ENCODE measurements at regions of chr2 and their contacts with region 1.

Region 1: GRCh38 chr2:27217217-27218121 is at the start of gene CAD:
- DNase-seq: peak; percentile 93
- H3K4me3 ChIP-seq: peak within 1 kb of the TSS; percentile 86
- H3K27ac ChIP-seq: peak within 1 kb of the TSS; percentile 77
- H3K4me1 ChIP-seq: peaks cover 41% of the 10 kb centered on the region
- CTCF ChIP-seq: peak; percentile 36; the same call in 1 of the 2 replicates
- total RNA-seq, gene CAD: 118 and 132 TPM in 2 replicates

Region 2: GRCh38 chr2:27233341-27233740 is 15.9 kb after region 1 on chr2:
- CTCF ChIA-PET with region 1: interaction called, 3 read pairs
- POLR2A ChIA-PET with region 1: interaction called, 15 read pairs
- intact Hi-C with region 1: no loop called
- DNase-seq: no peak
- H3K4me3 ChIP-seq: no peak overlapping the region
- H3K27ac ChIP-seq: no peak overlapping the region
- H3K4me1 ChIP-seq: no peaks in the 10 kb centered on the region
- CTCF ChIP-seq: no peak

Region 3: DNA sequence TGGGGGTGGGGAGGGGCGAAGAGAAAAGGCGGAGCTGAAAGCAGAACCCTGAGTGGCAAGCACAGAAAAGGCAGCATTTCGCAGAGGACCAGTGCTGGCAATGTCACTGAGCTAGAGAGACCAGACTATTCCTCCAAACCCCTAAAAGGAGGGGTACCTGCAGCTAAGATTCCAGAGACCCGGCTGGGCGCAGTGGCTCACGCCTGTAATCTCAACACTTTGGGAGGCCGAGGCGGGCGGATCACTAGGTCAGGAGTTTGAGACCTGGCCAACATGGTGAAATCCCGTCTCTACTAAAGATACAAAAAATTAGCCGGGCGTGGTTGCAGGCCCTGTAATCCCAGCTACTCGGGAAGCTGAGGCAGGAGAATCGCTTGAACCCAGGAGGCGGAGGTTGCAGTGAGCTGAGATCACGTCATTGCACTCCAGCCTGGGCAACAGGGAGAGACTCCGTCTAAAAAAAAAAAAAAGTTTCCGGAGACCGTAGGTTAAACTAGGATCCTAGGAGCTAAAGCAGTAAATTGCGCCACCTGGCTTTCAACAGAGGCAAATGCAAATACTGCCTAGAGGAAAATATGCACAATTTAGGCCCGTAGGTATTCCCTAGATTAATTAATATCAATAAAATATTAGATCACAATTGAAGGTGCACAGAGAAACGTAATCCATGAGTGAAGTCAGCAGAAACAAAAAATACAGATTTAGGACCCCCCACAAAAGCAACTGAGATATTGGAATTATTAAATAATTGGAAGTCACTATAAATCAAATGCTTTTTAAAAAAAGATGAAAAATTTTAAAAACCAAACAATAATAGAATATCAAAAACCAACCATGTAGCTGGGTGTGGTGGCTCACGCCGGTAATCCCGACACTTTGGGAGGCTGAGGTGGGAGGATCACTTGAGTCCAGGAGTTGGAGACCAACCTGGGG is 85.9 kb after region 1 on chr2:
- CTCF ChIA-PET with region 1: no interaction called
- POLR2A ChIA-PET with region 1: no interaction called
- intact Hi-C with region 1: loop called (anchors 1 kb)
- DNase-seq: peak; percentile 90
- H3K4me3 ChIP-seq: peak overlapping the region; percentile 61
- H3K27ac ChIP-seq: peak overlapping the region; percentile 43
- H3K4me1 ChIP-seq: peaks cover 14% of the 10 kb centered on the region
- CTCF ChIP-seq: peak; percentile 92

Measured in OCI-LY7 (cell line).